Activated B cell treated with CpG ODN at 0.5 μM for 24 hours (primary cell): ENCODE measurements at regions of chr3 and their contacts with region 1.

Region 1: GRCh38 chr3:141460097-141460704 is 26.6 kb upstream of the RASA2 start:
- DNase-seq: peak; percentile 67
- ATAC-seq: peak; percentile 99
- H3K4me3 Mint-ChIP-seq: no peak overlapping the region
- H3K27ac Mint-ChIP-seq: no peak overlapping the region
- H3K4me1 Mint-ChIP-seq: peaks cover 11% of the 10 kb centered on the region
- H3K27me3 Mint-ChIP-seq: no peaks in the 10 kb centered on the region
- CTCF ChIP-seq: no peak

Region 2: DNA sequence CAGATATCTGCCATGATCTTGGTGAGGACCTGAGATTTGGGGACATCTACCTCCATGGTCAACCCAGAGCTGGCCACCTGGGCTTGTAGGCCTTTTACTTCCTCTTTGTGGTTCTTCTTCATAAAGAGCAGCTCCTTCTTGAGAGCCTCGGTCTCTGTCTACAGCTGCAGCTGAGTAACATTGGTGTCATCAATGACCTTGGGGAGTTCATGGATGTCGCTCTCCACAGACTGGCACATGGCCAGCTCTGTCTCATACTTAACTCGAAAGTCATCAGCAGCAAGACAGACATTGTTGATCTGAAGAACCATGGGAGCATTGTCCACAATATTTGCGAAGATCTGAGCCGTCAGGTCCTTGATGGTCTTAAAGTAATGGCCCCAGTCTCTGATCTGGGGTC is 11.0 kb after region 1 on chr3:
- CTCF ChIA-PET with region 1: interaction called, 15 read pairs
- POLR2A ChIA-PET with region 1: interaction called, 3 read pairs
- intact Hi-C with region 1: loop called (anchors 1 kb)
- DNase-seq: no peak
- ATAC-seq: no peak
- H3K4me3 Mint-ChIP-seq: no peak overlapping the region
- H3K27ac Mint-ChIP-seq: peak overlapping the region; percentile 50
- H3K4me1 Mint-ChIP-seq: peaks cover 11% of the 10 kb centered on the region
- H3K27me3 Mint-ChIP-seq: no peaks in the 10 kb centered on the region
- CTCF ChIP-seq: no peak

Region 3: DNA sequence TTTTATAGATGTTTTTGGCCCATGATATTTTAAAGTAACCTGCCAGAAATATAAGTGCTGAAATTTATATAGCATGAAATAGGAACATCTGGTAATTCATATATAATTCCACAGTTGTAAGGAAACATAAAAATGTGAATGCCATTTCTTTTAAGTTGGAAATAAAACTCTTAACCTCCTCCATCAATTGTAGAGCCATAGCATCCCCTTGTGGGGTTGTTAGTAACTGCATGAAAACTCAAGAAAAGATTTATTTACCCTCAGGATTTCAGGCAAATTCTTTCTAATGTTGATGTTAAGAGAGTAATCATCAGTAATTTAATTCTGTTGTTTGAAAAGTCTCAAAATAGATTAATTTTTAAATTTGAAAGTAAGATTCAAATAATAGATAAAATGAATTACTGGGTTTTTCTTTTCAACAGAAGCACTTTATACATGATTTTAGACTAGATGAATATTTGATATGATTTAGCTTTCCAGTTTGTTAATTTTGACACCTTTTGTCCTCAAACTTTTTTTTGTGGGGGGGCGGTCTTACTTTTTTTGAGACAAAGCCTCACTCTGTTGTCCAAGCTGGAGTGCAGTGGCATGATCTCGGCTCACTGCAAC is 101.3 kb after region 1 on chr3:
- CTCF ChIA-PET with region 1: interaction called, 240 read pairs
- POLR2A ChIA-PET with region 1: interaction called, 5 read pairs
- intact Hi-C with region 1: loop called (anchors 1 kb)
- DNase-seq: no peak
- ATAC-seq: peak; percentile 65
- H3K4me3 Mint-ChIP-seq: no peak overlapping the region
- H3K27ac Mint-ChIP-seq: no peak overlapping the region
- H3K4me1 Mint-ChIP-seq: peaks cover 6% of the 10 kb centered on the region
- H3K27me3 Mint-ChIP-seq: no peaks in the 10 kb centered on the region
- CTCF ChIP-seq: no peak

Region 4: GRCh38 chr3:141575879-141576743 is 115.9 kb after region 1 on chr3:
- CTCF ChIA-PET with region 1: interaction called, 11 read pairs
- POLR2A ChIA-PET with region 1: no interaction called
- intact Hi-C with region 1: loop called (anchors 1 kb)
- DNase-seq: no peak
- ATAC-seq: peak; percentile 47
- H3K4me3 Mint-ChIP-seq: no peak overlapping the region
- H3K27ac Mint-ChIP-seq: peak overlapping the region; percentile 19
- H3K4me1 Mint-ChIP-seq: peaks cover 5% of the 10 kb centered on the region
- H3K27me3 Mint-ChIP-seq: no peaks in the 10 kb centered on the region
- CTCF ChIP-seq: no peak

Region 5: GRCh38 chr3:141913150-141913811 is 453.1 kb after region 1 on chr3:
- CTCF ChIA-PET with region 1: interaction called, 4 read pairs
- POLR2A ChIA-PET with region 1: no interaction called
- intact Hi-C with region 1: loop called (anchors 1 kb)
- DNase-seq: no peak
- ATAC-seq: peak; percentile 58
- H3K4me3 Mint-ChIP-seq: no peak overlapping the region
- H3K27ac Mint-ChIP-seq: no peak overlapping the region
- H3K4me1 Mint-ChIP-seq: no peaks in the 10 kb centered on the region
- H3K27me3 Mint-ChIP-seq: no peaks in the 10 kb centered on the region
- CTCF ChIP-seq: peak; percentile 48

Region 6: GRCh38 chr3:142279965-142280590 is 819.9 kb after region 1 on chr3:
- CTCF ChIA-PET with region 1: no interaction called
- POLR2A ChIA-PET with region 1: no interaction called
- intact Hi-C with region 1: loop called (anchors 2 kb)
- DNase-seq: no peak
- ATAC-seq: peak; percentile 80
- H3K4me3 Mint-ChIP-seq: no peak overlapping the region
- H3K27ac Mint-ChIP-seq: no peak overlapping the region
- H3K4me1 Mint-ChIP-seq: no peaks in the 10 kb centered on the region
- H3K27me3 Mint-ChIP-seq: no peaks in the 10 kb centered on the region
- CTCF ChIP-seq: no peak